Vagina (tissue), 2 donors: ENCODE measurements at regions of chr1 and their contacts with region 1.

Region 1: GRCh38 chr1:40143891-40144575 is 17.2 kb upstream of the RLF start:
- DNase-seq: no peak
- H3K4me3 ChIP-seq: no peak overlapping the region
- H3K27ac ChIP-seq: no peak overlapping the region
- H3K4me1 ChIP-seq: no peaks in the 10 kb centered on the region
- H3K27me3 ChIP-seq: no peaks in the 10 kb centered on the region
- CTCF ChIP-seq: peak; percentile 62 to 72 (median 62)
- POLR2A ChIP-seq: no peak

Region 2: DNA sequence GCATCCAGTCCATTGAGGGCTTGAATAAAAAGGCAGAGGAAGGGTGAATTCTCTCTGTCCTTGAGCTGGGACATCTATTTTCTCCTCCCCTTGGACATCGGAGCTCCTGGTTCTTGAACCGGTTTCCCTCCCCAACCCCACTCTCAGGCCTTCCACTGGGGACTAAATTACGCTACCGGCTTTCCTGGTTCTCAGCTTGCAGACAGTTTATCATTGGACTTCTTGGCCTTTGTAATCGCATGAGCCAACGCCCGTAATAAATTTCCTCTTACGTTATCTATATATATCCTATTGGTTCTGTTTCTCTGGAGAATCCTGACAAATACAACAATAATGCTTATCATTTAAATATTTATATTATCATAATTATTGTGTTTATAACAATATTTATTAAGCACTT is 193.4 kb after region 1 on chr1:
- intact Hi-C with region 1: loop called (anchors 2 kb)
- DNase-seq: no peak
- H3K4me3 ChIP-seq: no peak overlapping the region
- H3K27ac ChIP-seq: no peak overlapping the region
- H3K4me1 ChIP-seq: peaks cover 8% of the 10 kb centered on the region
- H3K27me3 ChIP-seq: no peaks in the 10 kb centered on the region
- CTCF ChIP-seq: no peak
- POLR2A ChIP-seq: no peak

Region 3: DNA sequence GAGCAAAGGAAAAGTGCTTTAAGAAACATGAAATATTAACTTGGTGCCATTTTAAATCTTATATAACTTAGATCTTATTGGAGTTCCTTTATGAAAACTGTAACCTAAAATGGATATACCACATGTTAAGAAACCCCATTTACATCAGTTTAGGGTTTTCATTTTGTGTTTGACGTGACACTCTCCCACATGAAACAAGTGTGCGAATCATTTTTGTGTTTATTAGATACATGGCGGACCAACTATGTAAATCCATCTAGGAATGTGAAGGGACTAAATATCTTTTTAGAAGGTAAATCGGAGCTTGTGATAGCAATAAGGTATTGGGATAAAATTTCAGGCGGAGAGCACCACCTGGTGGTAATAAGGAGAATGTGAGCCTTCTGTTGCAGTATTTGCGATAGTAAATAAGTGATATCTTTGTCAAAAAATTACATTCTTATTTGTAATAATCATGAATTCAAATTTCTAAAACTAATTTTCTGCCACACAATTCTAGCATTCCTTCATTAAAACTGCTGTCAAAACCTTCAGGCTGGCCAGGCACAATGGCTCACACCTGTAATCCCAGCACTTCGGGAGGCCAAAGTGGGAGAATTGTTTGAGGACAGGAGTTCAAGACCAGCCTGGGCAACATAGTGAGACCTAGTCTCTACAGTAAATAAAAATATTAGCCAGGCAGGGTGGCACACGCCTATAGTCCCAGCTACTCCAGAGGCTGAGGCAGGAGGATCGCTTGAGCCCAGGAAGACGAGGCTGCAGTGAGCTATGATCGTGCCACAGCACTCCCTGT is 260.8 kb after region 1 on chr1:
- intact Hi-C with region 1: loop called (anchors 10 kb)
- DNase-seq: no peak
- H3K4me3 ChIP-seq: no peak overlapping the region
- H3K27ac ChIP-seq: no peak overlapping the region
- H3K4me1 ChIP-seq: no peaks in the 10 kb centered on the region
- H3K27me3 ChIP-seq: no peaks in the 10 kb centered on the region
- CTCF ChIP-seq: peak; percentile 72 to 85 (median 73)
- POLR2A ChIP-seq: no peak